ENCODE measurements at regions of chr7 and their contacts with region 1.

Region 1: GRCh38 chr7:129218514-129219062 is 6.2 kb upstream of the AHCYL2 start:
- DNase-seq: peak; percentile 50 to 90
- H3K4me3 ChIP-seq: no peak overlapping the region
- H3K27ac ChIP-seq: no peak overlapping the region
- H3K4me1 ChIP-seq: no peaks in the 10 kb centered on the region; a peak in 1 of 7 replicates
- H3K27me3 ChIP-seq: no peaks in the 10 kb centered on the region
- CTCF ChIP-seq: peak; percentile 78 to 96 (median 94)
- EP300 ChIP-seq: no peak
- POLR2A ChIP-seq: no peak
- RAD21 ChIP-seq: peak; percentile 98 to 99

Region 2: DNA sequence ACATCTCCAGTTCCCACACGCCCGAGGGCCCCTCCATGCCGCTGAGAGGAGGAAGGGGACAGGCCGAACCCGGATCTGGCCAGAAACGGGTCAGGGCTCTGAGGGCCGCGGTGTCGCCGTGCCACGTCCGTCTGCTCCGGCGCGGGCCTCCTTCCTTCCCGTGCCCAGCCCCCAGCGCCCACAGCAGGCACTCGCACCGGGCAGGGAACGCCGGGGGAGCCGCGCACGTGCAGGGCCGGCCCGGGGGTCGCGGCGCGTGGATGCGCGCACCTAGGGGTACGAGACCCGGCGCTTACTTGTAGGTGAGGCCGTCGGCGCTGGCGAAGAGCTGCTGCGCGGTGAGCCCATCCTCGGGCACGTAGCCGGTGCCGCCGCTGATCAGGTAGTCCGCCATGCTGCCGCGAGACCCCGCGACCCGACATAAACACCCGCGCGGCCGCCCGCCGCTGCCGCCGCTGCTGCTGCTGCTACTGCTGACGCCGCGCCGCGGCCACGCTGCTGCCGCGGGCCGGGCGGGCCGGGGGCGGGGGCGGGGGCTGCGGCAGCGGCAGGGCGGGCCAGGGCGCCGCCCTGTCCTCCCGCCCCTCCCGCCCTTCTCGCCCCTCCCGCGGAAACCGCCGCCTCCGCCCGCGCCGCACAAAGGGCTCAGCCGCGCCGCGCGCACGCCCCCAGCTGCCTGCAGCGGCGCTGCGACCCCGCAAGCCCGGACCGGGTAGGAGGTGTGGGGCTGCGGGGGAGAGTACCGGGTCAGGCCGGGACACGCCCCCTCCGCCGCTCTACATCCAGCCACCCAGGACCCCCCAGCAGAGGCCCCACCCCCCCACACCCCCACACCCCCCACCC is 812.9 kb before region 1 on chr7:
- CTCF ChIA-PET with region 1: no interaction called
- POLR2A ChIA-PET with region 1: no interaction called
- DNase-seq: peak in 1 of 2 experiments; percentile 68
- H3K4me3 ChIP-seq: peak overlapping the region; percentile 47 to 72 (median 64)
- H3K27ac ChIP-seq: no peak overlapping the region
- H3K4me1 ChIP-seq: peaks cover 0 to 37% (median 27%) of the 10 kb centered on the region in 4 experiments; a peak in 6 of 7 replicates
- H3K27me3 ChIP-seq: peaks cover 30 to 60% (median 49%) of the 10 kb centered on the region in 4 experiments
- CTCF ChIP-seq: no peak
- EP300 ChIP-seq: no peak
- POLR2A ChIP-seq: no peak; a peak in 1 of 3 replicates
- RAD21 ChIP-seq: peak in 1 of 2 experiments; percentile 13; a peak in 1 of 4 replicates

Region 3: GRCh38 chr7:129163875-129164544 is 54.6 kb before region 1 on chr7:
- CTCF ChIA-PET with region 1: interaction called, 258 read pairs
- POLR2A ChIA-PET with region 1: interaction called, 12 read pairs
- DNase-seq: no peak
- H3K4me3 ChIP-seq: no peak overlapping the region
- H3K27ac ChIP-seq: no peak overlapping the region
- H3K4me1 ChIP-seq: peaks cover 2 to 13% (median 12%) of the 10 kb centered on the region in 4 experiments
- H3K27me3 ChIP-seq: no peaks in the 10 kb centered on the region; a peak in 1 of 7 replicates
- CTCF ChIP-seq: peak in 2 of 3 experiments; percentile 45 to 70; a peak in 2 of 4 replicates
- EP300 ChIP-seq: no peak
- POLR2A ChIP-seq: no peak
- RAD21 ChIP-seq: peak; percentile 48 to 52

Region 4: DNA sequence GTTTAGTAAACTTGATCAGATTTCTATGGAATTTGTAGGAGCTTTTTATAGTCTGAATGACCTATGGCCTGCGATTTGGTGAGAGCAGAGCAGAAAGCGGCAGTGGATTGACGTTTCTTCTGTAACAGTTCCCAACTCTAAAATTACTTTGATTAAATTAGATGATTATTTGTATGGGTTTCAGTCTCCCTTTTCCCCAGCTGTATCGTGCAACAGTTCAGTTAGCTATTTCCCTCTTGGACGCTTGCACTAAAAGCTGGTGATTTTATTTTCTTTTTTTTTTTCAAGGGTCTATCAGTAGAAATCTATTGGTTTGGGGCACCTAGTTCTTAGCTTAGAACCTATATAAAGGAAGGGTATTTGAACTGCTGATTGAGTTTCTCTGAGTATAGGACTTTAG is 13.1 kb after region 1 on chr7:
- CTCF ChIA-PET with region 1: interaction called, 15 read pairs
- POLR2A ChIA-PET with region 1: interaction called, 9 read pairs
- DNase-seq: no peak
- H3K4me3 ChIP-seq: no peak overlapping the region
- H3K27ac ChIP-seq: no peak overlapping the region
- H3K4me1 ChIP-seq: peaks cover 0 to 3% (median under 1%) of the 10 kb centered on the region in 4 experiments; a peak in 2 of 7 replicates
- H3K27me3 ChIP-seq: no peaks in the 10 kb centered on the region
- CTCF ChIP-seq: no peak
- EP300 ChIP-seq: no peak
- POLR2A ChIP-seq: no peak
- RAD21 ChIP-seq: no peak

Region 5: GRCh38 chr7:129285111-129285510 is 66.5 kb after region 1 on chr7:
- CTCF ChIA-PET with region 1: interaction called, 12 read pairs
- POLR2A ChIA-PET with region 1: interaction called, 3 read pairs
- DNase-seq: no peak
- H3K4me3 ChIP-seq: no peak overlapping the region
- H3K27ac ChIP-seq: 0 out of 2 replicates have a peak overlapping the region, but pooled peaks have one; percentile 29
- H3K4me1 ChIP-seq: peaks cover 2 to 4% (median 3%) of the 10 kb centered on the region in 4 experiments; a peak in 5 of 7 replicates
- H3K27me3 ChIP-seq: no peaks in the 10 kb centered on the region
- CTCF ChIP-seq: no peak
- EP300 ChIP-seq: no peak
- POLR2A ChIP-seq: no peak
- RAD21 ChIP-seq: no peak

Region 6: DNA sequence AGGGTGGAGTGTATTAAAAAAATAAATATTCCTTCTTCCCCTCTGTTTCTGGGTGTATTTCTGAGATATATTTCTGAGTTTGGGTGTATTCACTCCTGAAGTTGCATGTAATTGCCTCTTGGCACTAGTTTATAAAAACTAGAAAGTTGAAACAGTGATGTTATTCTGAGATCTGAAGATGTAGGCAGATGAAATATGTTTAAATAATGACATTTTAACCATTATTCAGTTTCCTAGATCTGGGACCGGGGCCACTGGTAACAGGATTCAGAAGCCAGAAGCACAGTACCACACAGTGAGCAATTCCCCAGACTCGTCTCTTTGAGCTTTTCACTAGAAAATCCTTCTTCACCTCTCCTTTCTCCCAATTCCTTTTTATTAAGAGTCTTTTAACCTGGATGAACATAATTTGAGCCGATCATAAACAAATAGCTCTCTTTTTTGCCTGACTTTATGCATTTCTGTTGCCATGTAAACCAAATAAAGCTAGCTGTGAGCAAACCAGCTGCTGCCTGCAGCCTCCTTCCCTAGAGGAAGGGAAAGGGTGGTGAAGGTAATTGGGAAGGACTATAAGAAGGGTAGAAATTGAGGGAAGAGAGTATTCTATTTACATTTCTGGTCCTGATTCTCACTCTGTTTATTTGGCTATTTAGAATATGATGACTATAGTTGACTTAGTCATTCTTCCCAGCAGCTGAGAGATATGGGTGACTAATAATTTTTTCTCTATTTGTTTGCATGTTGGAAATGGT is 113.9 kb after region 1 on chr7:
- CTCF ChIA-PET with region 1: interaction called, 34 read pairs
- POLR2A ChIA-PET with region 1: no interaction called
- DNase-seq: no peak
- H3K4me3 ChIP-seq: no peak overlapping the region
- H3K27ac ChIP-seq: no peak overlapping the region
- H3K4me1 ChIP-seq: no peaks in the 10 kb centered on the region
- H3K27me3 ChIP-seq: no peaks in the 10 kb centered on the region
- CTCF ChIP-seq: no peak
- EP300 ChIP-seq: no peak
- POLR2A ChIP-seq: no peak
- RAD21 ChIP-seq: no peak

Region 7: DNA sequence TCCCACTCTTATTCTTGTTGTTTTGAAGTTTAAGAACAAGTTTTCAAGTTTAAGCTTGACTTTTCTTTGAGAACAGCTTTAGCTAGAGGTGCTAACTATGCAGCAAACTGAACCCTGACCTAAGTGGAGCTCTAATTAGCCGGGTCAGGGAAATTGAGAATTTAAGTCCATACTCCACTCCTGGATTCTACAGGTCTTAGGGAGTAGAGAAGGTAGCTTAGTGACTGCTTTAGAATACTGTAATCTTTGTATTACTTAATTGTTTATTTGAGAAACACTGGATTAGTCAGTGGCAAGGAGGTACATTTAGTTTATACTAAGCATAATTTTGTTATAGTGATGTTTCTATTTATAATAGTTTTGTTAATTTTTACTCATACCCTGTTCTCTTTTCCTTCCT is 141.1 kb after region 1 on chr7:
- CTCF ChIA-PET with region 1: interaction called, 11 read pairs
- POLR2A ChIA-PET with region 1: no interaction called
- DNase-seq: no peak
- H3K4me3 ChIP-seq: no peak overlapping the region
- H3K27ac ChIP-seq: no peak overlapping the region
- H3K4me1 ChIP-seq: no peaks in the 10 kb centered on the region
- H3K27me3 ChIP-seq: no peaks in the 10 kb centered on the region
- CTCF ChIP-seq: no peak
- EP300 ChIP-seq: no peak
- POLR2A ChIP-seq: no peak
- RAD21 ChIP-seq: no peak

Region 8: DNA sequence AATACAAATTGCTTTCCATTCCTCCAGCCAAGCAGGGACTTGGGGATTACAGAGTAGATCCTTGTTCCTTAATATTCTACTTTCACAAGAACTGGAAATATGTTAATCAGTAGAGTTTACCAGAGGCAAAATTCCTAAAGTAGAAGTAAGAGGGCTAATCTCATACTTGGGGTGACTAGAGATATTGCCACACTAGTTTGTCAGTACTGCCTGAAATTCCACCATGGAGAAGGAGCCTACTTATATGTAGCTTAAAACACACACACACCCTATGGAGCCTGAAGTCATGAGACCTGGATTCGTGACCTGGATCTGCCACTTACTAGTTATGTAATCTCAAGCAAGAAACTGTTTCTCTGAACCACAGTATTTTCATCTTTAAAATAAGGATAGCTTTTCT is 249.5 kb after region 1 on chr7:
- CTCF ChIA-PET with region 1: interaction called, 30 read pairs
- POLR2A ChIA-PET with region 1: no interaction called
- DNase-seq: no peak
- H3K4me3 ChIP-seq: no peak overlapping the region
- H3K27ac ChIP-seq: no peak overlapping the region
- H3K4me1 ChIP-seq: peaks cover 0 to 8% (median 6%) of the 10 kb centered on the region in 4 experiments; a peak in 4 of 7 replicates
- H3K27me3 ChIP-seq: no peaks in the 10 kb centered on the region
- CTCF ChIP-seq: no peak
- EP300 ChIP-seq: no peak
- POLR2A ChIP-seq: no peak
- RAD21 ChIP-seq: no peak